B cell (primary cell): ENCODE measurements at regions of chr3 and their contacts with region 1.

Region 1: GRCh38 chr3:9731206-9732079 is at the start of gene BRPF1:
- DNase-seq: peak; percentile 99
- ATAC-seq: peak; percentile 94
- H3K4me3 ChIP-seq: peak within 1 kb of the TSS; percentile 76 to 93 (median 81)
- H3K4me3 Mint-ChIP-seq: peak within 1 kb of the TSS; percentile 97
- H3K27ac ChIP-seq: peak within 1 kb of the TSS; percentile 87 to 94
- H3K27ac Mint-ChIP-seq: peak within 1 kb of the TSS; percentile 97
- H3K4me1 ChIP-seq: peaks cover 28 to 36% of the 10 kb centered on the region in 2 donors
- H3K4me1 Mint-ChIP-seq: peaks cover 59% of the 10 kb centered on the region
- H3K27me3 ChIP-seq: no peaks in the 10 kb centered on the region
- H3K27me3 Mint-ChIP-seq: no peaks in the 10 kb centered on the region
- CTCF ChIP-seq: no peak
- total RNA-seq, gene BRPF1: 36.5 and 40.1 TPM in 2 replicates

Region 2: GRCh38 chr3:9352917-9353752 is 378.3 kb before region 1 on chr3:
- CTCF ChIA-PET with region 1: interaction called, 18 read pairs
- POLR2A ChIA-PET with region 1: no interaction called
- intact Hi-C with region 1: no loop called
- DNase-seq: peak; percentile 71
- ATAC-seq: peak; percentile 44
- H3K4me3 ChIP-seq: no peak overlapping the region
- H3K4me3 Mint-ChIP-seq: no peak overlapping the region
- H3K27ac ChIP-seq: peak overlapping the region in 1 of 2 donors; percentile 74
- H3K27ac Mint-ChIP-seq: no peak overlapping the region
- H3K4me1 ChIP-seq: peaks cover 17 to 23% of the 10 kb centered on the region in 2 donors
- H3K4me1 Mint-ChIP-seq: peaks cover 26% of the 10 kb centered on the region
- H3K27me3 ChIP-seq: no peaks in the 10 kb centered on the region
- H3K27me3 Mint-ChIP-seq: no peaks in the 10 kb centered on the region
- CTCF ChIP-seq: peak; percentile 88

Region 3: GRCh38 chr3:9503283-9503682 is 228.2 kb before region 1 on chr3:
- CTCF ChIA-PET with region 1: interaction called, 28 read pairs
- POLR2A ChIA-PET with region 1: no interaction called
- intact Hi-C with region 1: no loop called
- DNase-seq: peak; percentile 80
- ATAC-seq: peak; percentile 71
- H3K4me3 ChIP-seq: no peak overlapping the region
- H3K4me3 Mint-ChIP-seq: no peak overlapping the region
- H3K27ac ChIP-seq: no peak overlapping the region
- H3K27ac Mint-ChIP-seq: no peak overlapping the region
- H3K4me1 ChIP-seq: peaks cover 23 to 27% of the 10 kb centered on the region in 2 donors
- H3K4me1 Mint-ChIP-seq: peaks cover 24% of the 10 kb centered on the region
- H3K27me3 ChIP-seq: peaks cover 0 to 47% (median 26%) of the 10 kb centered on the region in 4 experiments
- H3K27me3 Mint-ChIP-seq: peaks cover 41% of the 10 kb centered on the region
- CTCF ChIP-seq: peak; percentile 85

Region 4: GRCh38 chr3:9721015-9721699 is 10.3 kb before region 1 on chr3:
- CTCF ChIA-PET with region 1: interaction called, 11 read pairs
- POLR2A ChIA-PET with region 1: no interaction called
- intact Hi-C with region 1: no loop called
- DNase-seq: no peak
- ATAC-seq: no peak
- H3K4me3 ChIP-seq: no peak overlapping the region
- H3K4me3 Mint-ChIP-seq: no peak overlapping the region
- H3K27ac ChIP-seq: peak overlapping the region in 1 of 2 donors; percentile 1
- H3K27ac Mint-ChIP-seq: peak overlapping the region; percentile 80
- H3K4me1 ChIP-seq: peaks cover 10 to 13% of the 10 kb centered on the region in 2 donors
- H3K4me1 Mint-ChIP-seq: peaks cover 20% of the 10 kb centered on the region
- H3K27me3 ChIP-seq: no peaks in the 10 kb centered on the region
- H3K27me3 Mint-ChIP-seq: peaks cover under 1% of the 10 kb centered on the region
- CTCF ChIP-seq: no peak

Region 5: DNA sequence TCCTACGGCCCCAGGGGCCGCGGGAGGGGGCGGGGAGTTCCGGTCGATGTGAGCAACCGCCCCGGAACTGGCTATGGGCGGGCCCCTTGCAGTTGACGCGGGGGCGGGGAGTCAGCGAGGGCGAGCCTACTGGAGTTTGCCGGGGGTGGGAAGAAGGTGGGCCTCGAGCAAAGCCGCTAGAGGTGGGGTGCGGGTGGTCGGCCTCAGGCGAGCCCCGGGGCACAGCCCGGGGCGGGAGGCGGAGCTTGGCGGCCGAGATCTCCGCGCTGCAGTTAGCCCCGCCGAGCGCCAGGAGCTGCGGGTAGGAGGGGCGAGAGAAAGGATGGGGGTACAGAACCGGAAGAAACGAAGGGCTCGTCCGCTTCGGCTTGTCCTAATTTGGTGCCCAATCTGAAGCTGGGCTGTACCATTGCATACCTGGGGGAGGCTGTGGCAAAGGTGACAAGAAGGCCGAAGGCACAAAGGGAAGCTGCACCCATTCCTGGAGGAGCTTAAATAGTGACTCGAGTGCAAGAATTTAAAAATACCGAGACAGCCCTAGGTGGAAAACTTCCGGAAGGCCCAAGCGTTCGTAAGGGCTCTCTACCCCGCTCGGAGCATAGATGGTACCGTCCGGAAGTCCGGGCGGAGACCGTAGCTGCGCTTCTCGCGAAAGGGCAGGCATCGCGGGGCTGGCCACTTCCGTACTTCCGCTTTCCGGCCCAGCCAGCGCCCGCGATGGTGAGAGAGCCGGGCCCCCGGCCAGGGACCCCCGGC is 61.1 kb after region 1 on chr3 and contains the starts of genes ARPC4 and TADA3:
- CTCF ChIA-PET with region 1: interaction called, 6 read pairs
- POLR2A ChIA-PET with region 1: interaction called, 6 read pairs
- intact Hi-C with region 1: loop called (anchors 1 kb)
- DNase-seq: peak; percentile 99
- ATAC-seq: peak; percentile 77
- H3K4me3 ChIP-seq: peak within 1 kb of the TSS; percentile 78 to 99 (median 94)
- H3K4me3 Mint-ChIP-seq: peak within 1 kb of the TSS; percentile 99
- H3K27ac ChIP-seq: peak within 1 kb of the TSS; percentile 93 to 99
- H3K27ac Mint-ChIP-seq: peak within 1 kb of the TSS; percentile 100
- H3K4me1 ChIP-seq: peaks cover 51 to 63% of the 10 kb centered on the region in 2 donors
- H3K4me1 Mint-ChIP-seq: peaks cover 57% of the 10 kb centered on the region
- H3K27me3 ChIP-seq: no peaks in the 10 kb centered on the region
- H3K27me3 Mint-ChIP-seq: no peaks in the 10 kb centered on the region
- CTCF ChIP-seq: no peak
- total RNA-seq, gene ARPC4: 174 and 179 TPM in 2 replicates
- total RNA-seq, gene TADA3: 43.4 and 45.6 TPM in 2 replicates

Region 6: GRCh38 chr3:9932843-9933560 is 201.6 kb after region 1 on chr3:
- CTCF ChIA-PET with region 1: no interaction called
- POLR2A ChIA-PET with region 1: interaction called, 3 read pairs
- intact Hi-C with region 1: loop called (anchors 5 kb)
- DNase-seq: peak; percentile 93
- ATAC-seq: peak; percentile 68
- H3K4me3 ChIP-seq: peak overlapping the region in 4 of 5 experiments; percentile 54 to 95 (median 71)
- H3K4me3 Mint-ChIP-seq: peak overlapping the region; percentile 94
- H3K27ac ChIP-seq: peak overlapping the region; percentile 82 to 94
- H3K27ac Mint-ChIP-seq: peak overlapping the region; percentile 98
- H3K4me1 ChIP-seq: peaks cover 22 to 26% of the 10 kb centered on the region in 2 donors
- H3K4me1 Mint-ChIP-seq: peaks cover 39% of the 10 kb centered on the region
- H3K27me3 ChIP-seq: no peaks in the 10 kb centered on the region
- H3K27me3 Mint-ChIP-seq: no peaks in the 10 kb centered on the region
- CTCF ChIP-seq: peak; percentile 85

Region 7: DNA sequence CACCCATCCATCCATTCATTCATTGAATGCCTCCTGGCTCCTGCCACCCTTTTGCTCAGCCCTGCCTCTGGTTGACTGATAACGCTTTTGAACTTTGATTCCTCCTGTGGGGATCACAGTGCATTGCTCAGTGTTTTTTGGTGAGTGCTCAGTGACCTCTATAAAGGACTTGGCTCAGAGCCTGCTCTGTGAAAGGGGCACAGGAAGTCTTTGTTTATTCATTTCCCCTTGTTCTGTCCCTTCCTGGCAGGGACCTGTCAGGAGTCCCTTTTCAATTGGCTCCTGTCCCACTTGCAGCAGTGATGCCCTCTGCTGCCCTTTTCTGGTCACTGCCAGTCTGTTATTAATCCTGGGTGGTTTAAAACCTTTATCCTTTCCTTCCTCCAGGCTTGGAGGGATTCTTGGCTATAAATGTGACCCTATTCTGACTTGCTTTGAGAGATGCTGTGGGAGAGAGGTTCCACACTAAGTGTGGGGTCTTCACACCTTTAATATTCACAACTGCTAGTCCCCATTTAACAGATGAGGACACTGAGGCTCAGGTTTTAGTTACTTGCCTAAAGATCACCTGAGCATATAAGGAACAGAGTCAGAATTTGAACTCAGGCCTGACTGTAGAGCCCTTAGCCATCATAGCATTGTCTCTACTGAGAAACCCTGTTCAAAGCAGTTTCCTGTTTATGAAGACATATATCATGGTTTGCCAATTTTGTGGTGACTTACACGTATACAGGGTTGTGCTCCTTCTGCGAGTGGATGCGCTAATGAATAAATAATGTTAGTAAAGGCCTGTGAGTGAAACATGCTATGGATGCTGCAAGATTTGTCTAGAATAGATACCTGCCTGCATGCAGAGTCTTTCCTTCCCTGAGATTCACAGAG is 493.6 kb after region 1 on chr3:
- CTCF ChIA-PET with region 1: no interaction called
- POLR2A ChIA-PET with region 1: no interaction called
- intact Hi-C with region 1: no loop called
- DNase-seq: peak; percentile 79
- ATAC-seq: peak; percentile 46
- H3K4me3 ChIP-seq: no peak overlapping the region
- H3K4me3 Mint-ChIP-seq: peak overlapping the region; percentile 67
- H3K27ac ChIP-seq: peak overlapping the region in 1 of 2 donors; percentile 1
- H3K27ac Mint-ChIP-seq: peak overlapping the region; percentile 83
- H3K4me1 ChIP-seq: peaks cover 40 to 66% of the 10 kb centered on the region in 2 donors
- H3K4me1 Mint-ChIP-seq: peaks cover 63% of the 10 kb centered on the region
- H3K27me3 ChIP-seq: no peaks in the 10 kb centered on the region
- H3K27me3 Mint-ChIP-seq: no peaks in the 10 kb centered on the region
- CTCF ChIP-seq: peak; percentile 83

Region 8: DNA sequence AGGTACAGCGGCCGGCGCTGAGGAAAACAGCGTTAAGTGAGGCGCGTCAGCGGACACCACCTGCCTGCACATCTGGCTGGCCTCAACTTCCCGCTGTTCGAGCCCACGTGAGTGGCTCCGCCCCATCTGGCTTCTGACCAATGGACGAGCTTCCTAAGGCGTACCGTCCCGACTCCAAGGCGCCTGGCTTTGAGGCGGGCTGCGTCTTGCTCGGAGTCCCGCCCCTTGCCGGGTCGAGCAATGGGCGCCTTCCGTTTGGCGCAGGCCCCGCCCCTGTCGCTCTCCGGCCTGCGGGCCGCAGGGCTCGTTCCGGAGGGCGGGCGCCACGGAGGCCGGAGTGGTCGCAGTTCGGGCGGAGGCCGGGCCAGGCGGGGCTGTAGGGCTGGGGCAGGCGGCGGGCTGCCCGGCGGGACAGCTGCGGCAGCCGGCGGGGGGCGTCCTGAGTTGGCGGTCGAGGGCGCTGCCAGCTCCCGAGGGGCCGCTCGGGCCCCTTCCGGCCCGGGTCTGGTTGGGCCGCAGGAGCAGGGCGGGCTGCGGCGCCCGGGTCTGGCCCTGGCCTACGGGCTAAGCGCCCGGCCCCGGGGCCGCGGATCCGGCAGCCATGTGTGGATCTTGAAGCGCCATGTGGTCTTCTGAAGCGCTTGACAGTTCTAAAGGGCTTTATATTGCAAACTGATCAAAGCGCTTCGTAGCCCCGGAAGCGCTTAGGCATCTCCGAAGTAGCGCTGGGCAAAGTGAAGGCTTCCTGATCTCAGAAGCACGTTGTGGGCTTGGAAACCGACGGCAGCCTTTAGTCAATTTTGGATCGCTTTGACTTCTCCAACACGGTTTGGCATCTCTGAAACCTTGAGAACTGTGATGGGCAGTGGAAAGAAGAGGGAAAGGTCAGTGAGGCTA is 517.0 kb after region 1 on chr3 and contains the start of gene TATDN2:
- CTCF ChIA-PET with region 1: no interaction called
- POLR2A ChIA-PET with region 1: no interaction called
- intact Hi-C with region 1: loop called (anchors 2 kb)
- DNase-seq: peak; percentile 96
- ATAC-seq: peak; percentile 96
- H3K4me3 ChIP-seq: peak within 1 kb of the TSS; percentile 69 to 86 (median 82)
- H3K4me3 Mint-ChIP-seq: peak within 1 kb of the TSS; percentile 97
- H3K27ac ChIP-seq: peak within 1 kb of the TSS; percentile 70 to 78
- H3K27ac Mint-ChIP-seq: peak within 1 kb of the TSS; percentile 92
- H3K4me1 ChIP-seq: peaks cover 25 to 28% of the 10 kb centered on the region in 2 donors
- H3K4me1 Mint-ChIP-seq: peaks cover 39% of the 10 kb centered on the region
- H3K27me3 ChIP-seq: no peaks in the 10 kb centered on the region
- H3K27me3 Mint-ChIP-seq: no peaks in the 10 kb centered on the region
- CTCF ChIP-seq: no peak
- total RNA-seq, gene TATDN2: 62.7 and 62.9 TPM in 2 replicates